Left cardiac atrium (tissue), 4 donors: ENCODE measurements at regions of chr2 and their contacts with region 1.

Region 1: GRCh38 chr2:17672583-17673317 is 80.9 kb downstream of the SMC6 start:
- DNase-seq: no peak
- ATAC-seq: no peak

Region 2: DNA sequence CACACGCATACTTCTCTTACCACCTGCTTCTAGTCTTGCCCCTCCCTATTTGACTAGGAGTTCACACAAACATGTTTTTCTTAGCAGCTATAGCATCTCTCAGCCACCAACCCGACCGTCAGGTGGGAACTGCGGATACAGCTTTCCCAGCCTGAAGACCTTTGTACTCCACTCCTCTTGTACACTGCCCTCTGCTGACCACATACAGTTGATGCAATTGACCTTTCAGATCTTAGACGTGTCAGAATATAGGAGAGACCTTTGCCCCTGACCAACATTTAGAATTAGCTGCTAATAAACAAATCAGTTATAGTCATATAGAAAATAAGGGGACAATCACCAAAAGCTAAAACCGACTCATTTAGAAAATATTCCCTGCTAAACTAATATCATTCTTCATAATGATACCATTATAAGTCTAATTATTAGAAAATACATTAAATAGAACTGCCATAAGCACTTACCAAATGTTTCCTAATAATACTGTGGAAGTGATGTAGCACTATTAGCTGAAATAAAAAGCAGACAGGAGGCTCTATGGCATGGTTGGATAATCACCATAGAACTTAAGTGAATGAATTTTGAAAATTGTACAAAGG is 362.9 kb before region 1 on chr2:
- intact Hi-C with region 1: loop called in 1 of 2 experiments (anchors 10 kb)
- DNase-seq: no peak
- ATAC-seq: peak in 1 of 2 donors; percentile 70

Region 3: GRCh38 chr2:17646838-17647701 is 25.7 kb before region 1 on chr2:
- intact Hi-C with region 1: no loop called
- DNase-seq: no peak
- ATAC-seq: no peak

Region 4: GRCh38 chr2:17719562-17720371 is 47.0 kb after region 1 on chr2:
- intact Hi-C with region 1: no loop called
- DNase-seq: no peak
- ATAC-seq: no peak